ENCODE measurements at regions of chr10 and their contacts with region 1.

Region 1: DNA sequence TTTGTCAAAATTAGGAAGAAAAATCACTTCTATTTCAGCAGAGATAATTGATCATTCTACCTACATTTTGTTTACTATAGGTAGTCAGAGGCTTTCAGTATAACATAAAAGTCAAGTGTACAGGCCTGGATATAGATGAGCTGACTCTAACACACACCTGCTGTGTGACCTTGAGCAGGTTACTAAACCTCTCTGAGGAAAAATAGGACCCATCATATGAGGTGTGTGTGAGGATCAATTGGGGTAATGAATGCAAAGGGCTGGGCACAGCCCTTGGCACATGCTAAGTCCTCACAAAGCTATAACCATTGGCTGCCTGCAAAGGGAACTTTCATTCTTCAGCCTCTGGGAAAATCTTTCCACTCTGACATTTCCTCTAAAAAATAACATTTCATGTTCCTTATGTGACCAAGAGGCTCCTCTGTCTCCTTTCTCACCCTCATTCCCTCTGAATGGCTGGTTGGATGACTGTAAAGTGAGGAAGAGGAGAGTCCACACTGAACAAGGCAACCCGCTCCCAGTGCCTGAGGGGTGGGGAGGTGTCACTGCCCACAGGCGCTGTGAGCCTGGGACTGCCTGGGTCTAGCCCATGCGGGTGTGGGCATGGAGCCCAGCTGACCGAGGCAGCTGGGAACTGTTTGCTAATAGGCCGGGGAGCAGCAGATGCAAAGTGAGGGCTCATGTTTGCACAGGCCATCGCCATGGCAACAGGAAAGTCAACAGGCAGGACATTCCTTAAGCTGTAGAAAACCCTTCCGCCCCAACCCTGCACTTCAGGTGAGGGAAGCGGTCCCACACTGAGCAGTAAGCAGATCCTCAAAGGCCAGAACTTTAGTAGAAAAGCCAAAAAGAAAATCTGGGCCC is 36.8 kb downstream of the MYOF start:
- DNase-seq: peak; percentile 97 to 98
- H3K4me3 ChIP-seq: no peak overlapping the region
- H3K4me3 Mint-ChIP-seq: peak overlapping the region; percentile 60
- H3K27ac Mint-ChIP-seq: peak overlapping the region; percentile 96
- H3K4me1 ChIP-seq: peaks cover 60% of the 10 kb centered on the region
- H3K4me1 Mint-ChIP-seq: peaks cover 68% of the 10 kb centered on the region
- H3K27me3 ChIP-seq: no peaks in the 10 kb centered on the region
- H3K27me3 Mint-ChIP-seq: no peaks in the 10 kb centered on the region
- CTCF ChIP-seq: no peak

Region 2: GRCh38 chr10:93224005-93224779 is 221.1 kb before region 1 on chr10:
- CTCF ChIA-PET with region 1: no interaction called
- POLR2A ChIA-PET with region 1: no interaction called
- intact Hi-C with region 1: no loop called
- DNase-seq: no peak
- H3K4me3 ChIP-seq: no peak overlapping the region
- H3K4me3 Mint-ChIP-seq: no peak overlapping the region
- H3K27ac Mint-ChIP-seq: no peak overlapping the region
- H3K4me1 ChIP-seq: no peaks in the 10 kb centered on the region
- H3K4me1 Mint-ChIP-seq: no peaks in the 10 kb centered on the region
- H3K27me3 ChIP-seq: no peaks in the 10 kb centered on the region
- H3K27me3 Mint-ChIP-seq: no peaks in the 10 kb centered on the region
- CTCF ChIP-seq: peak in 1 of 2 experiments; percentile 30

Region 3: DNA sequence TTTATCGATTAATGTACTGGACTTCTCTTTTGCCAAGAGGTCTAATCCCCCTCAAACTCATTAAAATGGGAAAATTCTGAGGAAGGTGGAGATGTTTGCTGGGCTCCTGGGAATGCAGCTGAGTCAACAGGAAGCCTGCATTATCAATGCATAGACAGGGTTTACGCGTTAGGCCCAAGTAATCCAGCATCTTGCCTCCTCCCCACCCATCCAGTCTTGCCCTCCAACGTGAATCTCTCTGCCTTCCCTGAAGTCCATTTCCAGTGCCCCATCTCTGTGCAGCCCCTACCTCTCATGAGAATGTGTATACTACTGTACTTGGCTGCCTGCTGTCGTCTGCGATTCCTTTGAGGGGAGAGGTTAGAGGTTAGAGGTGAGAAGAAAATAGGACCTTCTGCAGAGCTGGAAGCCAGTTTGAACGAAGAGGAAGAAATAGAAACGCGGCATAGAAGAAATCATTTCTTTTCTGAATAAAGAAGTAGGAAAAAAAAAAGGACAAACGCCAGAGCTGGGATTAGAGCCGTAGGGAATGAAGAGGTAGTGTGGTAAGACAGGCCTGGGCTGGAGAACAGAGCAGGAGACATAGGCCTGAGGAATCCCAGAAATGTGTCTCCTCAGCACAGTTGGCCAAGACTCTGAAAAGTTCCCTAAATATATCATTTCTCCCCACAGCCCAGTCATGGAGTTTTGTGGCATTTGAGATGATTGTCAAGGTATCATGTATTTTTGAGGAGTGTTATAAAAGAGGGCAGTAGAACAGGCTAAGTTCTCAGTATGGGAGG is 38.8 kb before region 1 on chr10:
- CTCF ChIA-PET with region 1: no interaction called
- POLR2A ChIA-PET with region 1: no interaction called
- intact Hi-C with region 1: loop called (anchors 5 kb)
- DNase-seq: no peak
- H3K4me3 ChIP-seq: no peak overlapping the region
- H3K4me3 Mint-ChIP-seq: peak overlapping the region; percentile 6
- H3K27ac Mint-ChIP-seq: peak overlapping the region; percentile 48
- H3K4me1 ChIP-seq: peaks cover 41% of the 10 kb centered on the region
- H3K4me1 Mint-ChIP-seq: peaks cover 47% of the 10 kb centered on the region
- H3K27me3 ChIP-seq: no peaks in the 10 kb centered on the region
- H3K27me3 Mint-ChIP-seq: no peaks in the 10 kb centered on the region
- CTCF ChIP-seq: no peak

Region 4: GRCh38 chr10:93471110-93471651 is 25.9 kb after region 1 on chr10:
- CTCF ChIA-PET with region 1: interaction called, 4 read pairs
- POLR2A ChIA-PET with region 1: interaction called, 23 read pairs
- intact Hi-C with region 1: no loop called
- DNase-seq: peak; percentile 61 to 72
- H3K4me3 ChIP-seq: no peak overlapping the region
- H3K4me3 Mint-ChIP-seq: peak overlapping the region; percentile 37
- H3K27ac Mint-ChIP-seq: peak overlapping the region; percentile 95
- H3K4me1 ChIP-seq: peaks cover 88% of the 10 kb centered on the region
- H3K4me1 Mint-ChIP-seq: peaks cover 51% of the 10 kb centered on the region
- H3K27me3 ChIP-seq: no peaks in the 10 kb centered on the region
- H3K27me3 Mint-ChIP-seq: no peaks in the 10 kb centered on the region
- CTCF ChIP-seq: no peak

Region 5: GRCh38 chr10:93600446-93601145 is 155.3 kb after region 1 on chr10:
- CTCF ChIA-PET with region 1: no interaction called
- POLR2A ChIA-PET with region 1: no interaction called
- intact Hi-C with region 1: no loop called
- DNase-seq: no peak
- H3K4me3 ChIP-seq: peak overlapping the region; percentile 87
- H3K4me3 Mint-ChIP-seq: peak overlapping the region; percentile 77
- H3K27ac Mint-ChIP-seq: no peak overlapping the region
- H3K4me1 ChIP-seq: peaks cover 22% of the 10 kb centered on the region
- H3K4me1 Mint-ChIP-seq: peaks cover 12% of the 10 kb centered on the region
- H3K27me3 ChIP-seq: no peaks in the 10 kb centered on the region
- H3K27me3 Mint-ChIP-seq: no peaks in the 10 kb centered on the region
- CTCF ChIP-seq: no peak